Calu3 (cell line): ENCODE measurements at regions of chr7 and their contacts with region 1.

Region 1: GRCh38 chr7:27774717-27775328 is 34.9 kb downstream of the TAX1BP1 start:
- DNase-seq: peak; percentile 26
- H3K4me3 Mint-ChIP-seq: no peak overlapping the region
- H3K27ac Mint-ChIP-seq: no peak overlapping the region
- H3K4me1 Mint-ChIP-seq: peaks cover 25% of the 10 kb centered on the region
- H3K27me3 Mint-ChIP-seq: no peaks in the 10 kb centered on the region
- CTCF ChIP-seq: peak; percentile 78

Region 2: GRCh38 chr7:27196287-27196767 is 578.5 kb before region 1 on chr7:
- CTCF ChIA-PET with region 1: interaction called, 20 read pairs
- intact Hi-C with region 1: loop called (anchors 5 kb)
- DNase-seq: peak; percentile 89
- H3K4me3 Mint-ChIP-seq: no peak overlapping the region
- H3K27ac Mint-ChIP-seq: no peak overlapping the region
- H3K4me1 Mint-ChIP-seq: peaks cover 10% of the 10 kb centered on the region
- H3K27me3 Mint-ChIP-seq: peaks cover 40% of the 10 kb centered on the region
- CTCF ChIP-seq: peak; percentile 93

Region 3: GRCh38 chr7:27640914-27641580 is 133.8 kb before region 1 on chr7:
- CTCF ChIA-PET with region 1: interaction called, 7 read pairs
- intact Hi-C with region 1: loop called (anchors 5 kb)
- DNase-seq: peak; percentile 88
- H3K4me3 Mint-ChIP-seq: peak overlapping the region; percentile 50
- H3K27ac Mint-ChIP-seq: peak overlapping the region; percentile 76
- H3K4me1 Mint-ChIP-seq: peaks cover 68% of the 10 kb centered on the region
- H3K27me3 Mint-ChIP-seq: no peaks in the 10 kb centered on the region
- CTCF ChIP-seq: no peak

Region 4: DNA sequence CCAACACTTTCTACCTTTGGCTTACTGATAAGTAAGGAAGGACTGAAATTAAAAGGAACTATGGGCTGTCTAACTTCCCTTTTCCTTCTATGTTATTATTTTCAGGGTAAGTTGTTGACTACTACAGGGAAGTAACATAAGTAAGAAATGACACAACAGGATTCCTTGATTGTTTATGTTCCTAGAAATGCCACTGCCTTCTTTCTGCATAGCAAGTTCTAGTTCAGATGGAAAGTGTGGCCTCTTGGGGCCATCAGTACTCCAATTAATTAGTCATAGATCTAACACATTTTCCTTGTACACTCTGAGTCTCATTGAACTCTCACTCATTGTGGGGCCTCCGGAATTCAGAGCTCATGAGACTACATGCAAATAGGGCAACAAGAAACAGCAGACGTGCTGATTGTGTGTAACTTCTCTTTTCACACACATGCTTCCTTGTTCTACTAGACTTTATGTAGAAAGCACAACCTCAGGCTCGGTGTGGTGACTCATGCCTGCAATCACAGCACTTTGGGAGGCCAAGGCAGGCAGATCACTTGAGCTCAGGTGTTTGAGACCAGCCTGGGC is 76.9 kb before region 1 on chr7:
- CTCF ChIA-PET with region 1: interaction called, 14 read pairs
- intact Hi-C with region 1: loop called (anchors 2 kb)
- DNase-seq: peak; percentile 81
- H3K4me3 Mint-ChIP-seq: no peak overlapping the region
- H3K27ac Mint-ChIP-seq: peak overlapping the region; percentile 96
- H3K4me1 Mint-ChIP-seq: peaks cover 39% of the 10 kb centered on the region
- H3K27me3 Mint-ChIP-seq: no peaks in the 10 kb centered on the region
- CTCF ChIP-seq: no peak

Region 5: GRCh38 chr7:27745064-27745583 is 29.7 kb before region 1 on chr7:
- CTCF ChIA-PET with region 1: interaction called, 31 read pairs
- intact Hi-C with region 1: loop called (anchors 1 kb)
- DNase-seq: peak; percentile 46
- H3K4me3 Mint-ChIP-seq: peak overlapping the region; percentile 46
- H3K27ac Mint-ChIP-seq: peak overlapping the region; percentile 74
- H3K4me1 Mint-ChIP-seq: peaks cover 52% of the 10 kb centered on the region
- H3K27me3 Mint-ChIP-seq: no peaks in the 10 kb centered on the region
- CTCF ChIP-seq: peak; percentile 66

Region 6: DNA sequence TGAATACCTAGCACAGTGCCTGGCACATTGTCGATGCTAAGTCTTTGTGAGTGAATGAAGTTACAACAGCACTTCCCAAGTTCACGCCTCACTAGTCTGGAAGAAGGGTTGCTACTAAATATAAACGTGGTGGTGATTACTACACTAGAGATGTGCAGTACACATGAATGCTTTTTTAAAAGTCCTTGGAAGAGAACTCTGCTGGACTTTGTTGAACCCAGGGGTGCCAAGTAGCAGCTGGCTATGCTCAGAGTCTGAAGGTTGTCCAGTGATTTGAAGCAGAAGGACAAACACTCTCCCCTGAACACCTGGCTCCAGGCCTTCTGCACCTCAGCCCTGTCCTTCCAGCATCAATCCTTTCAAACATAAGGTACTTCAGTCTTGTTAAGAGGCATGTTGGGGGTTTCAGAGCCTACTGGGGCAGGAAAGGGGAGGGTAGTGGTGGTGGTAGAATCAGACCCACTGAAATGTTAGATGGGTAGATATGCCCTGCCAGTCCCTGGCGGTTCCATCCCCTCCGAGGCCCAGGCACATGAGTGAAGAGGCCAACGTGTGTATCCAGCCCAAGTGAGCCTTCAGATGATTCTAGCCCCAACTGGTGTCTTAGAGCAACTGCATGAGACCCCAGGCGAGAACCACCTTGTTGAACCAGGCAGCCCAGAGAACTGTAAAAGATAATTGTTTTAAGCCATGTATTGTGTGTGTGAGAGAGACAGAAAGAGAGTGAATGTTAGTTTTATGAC is 59.5 kb after region 1 on chr7:
- CTCF ChIA-PET with region 1: no interaction called
- intact Hi-C with region 1: no loop called
- DNase-seq: no peak
- H3K4me3 Mint-ChIP-seq: no peak overlapping the region
- H3K27ac Mint-ChIP-seq: no peak overlapping the region
- H3K4me1 Mint-ChIP-seq: no peaks in the 10 kb centered on the region
- H3K27me3 Mint-ChIP-seq: no peaks in the 10 kb centered on the region
- CTCF ChIP-seq: no peak